ENCODE measurements at regions of chr1 and their contacts with region 1.

Region 1: GRCh38 chr1:77664939-77665516 is 17.4 kb downstream of the ZZZ3 start:
- DNase-seq: no peak
- ATAC-seq: no peak
- H3K4me3 ChIP-seq: no peak overlapping the region
- H3K27ac ChIP-seq: no peak overlapping the region
- H3K4me1 ChIP-seq: peaks cover 4% of the 10 kb centered on the region; the same call in 1 of the 2 replicates
- H3K27me3 ChIP-seq: no peaks in the 10 kb centered on the region
- CTCF ChIP-seq: no peak
- POLR2A ChIP-seq: no peak
- RAD21 ChIP-seq: no peak

Region 2: GRCh38 chr1:77585610-77586314 is 79.3 kb before region 1 on chr1:
- CTCF ChIA-PET with region 1: interaction called, 4 read pairs
- POLR2A ChIA-PET with region 1: no interaction called
- dilution Hi-C with region 1: no loop called
- in situ Hi-C with region 1: no loop called
- intact Hi-C with region 1: loop called (anchors 5 kb)
- DNase-seq: no peak
- ATAC-seq: peak; percentile 11; the same call in 1 of the 2 replicates
- H3K4me3 ChIP-seq: no peak overlapping the region
- H3K27ac ChIP-seq: no peak overlapping the region
- H3K4me1 ChIP-seq: no peaks in the 10 kb centered on the region
- H3K27me3 ChIP-seq: no peaks in the 10 kb centered on the region
- CTCF ChIP-seq: no peak
- POLR2A ChIP-seq: no peak
- RAD21 ChIP-seq: no peak